OCI-LY7 (cell line): ENCODE measurements at regions of chr10 and their contacts with region 1.

Region 1: DNA sequence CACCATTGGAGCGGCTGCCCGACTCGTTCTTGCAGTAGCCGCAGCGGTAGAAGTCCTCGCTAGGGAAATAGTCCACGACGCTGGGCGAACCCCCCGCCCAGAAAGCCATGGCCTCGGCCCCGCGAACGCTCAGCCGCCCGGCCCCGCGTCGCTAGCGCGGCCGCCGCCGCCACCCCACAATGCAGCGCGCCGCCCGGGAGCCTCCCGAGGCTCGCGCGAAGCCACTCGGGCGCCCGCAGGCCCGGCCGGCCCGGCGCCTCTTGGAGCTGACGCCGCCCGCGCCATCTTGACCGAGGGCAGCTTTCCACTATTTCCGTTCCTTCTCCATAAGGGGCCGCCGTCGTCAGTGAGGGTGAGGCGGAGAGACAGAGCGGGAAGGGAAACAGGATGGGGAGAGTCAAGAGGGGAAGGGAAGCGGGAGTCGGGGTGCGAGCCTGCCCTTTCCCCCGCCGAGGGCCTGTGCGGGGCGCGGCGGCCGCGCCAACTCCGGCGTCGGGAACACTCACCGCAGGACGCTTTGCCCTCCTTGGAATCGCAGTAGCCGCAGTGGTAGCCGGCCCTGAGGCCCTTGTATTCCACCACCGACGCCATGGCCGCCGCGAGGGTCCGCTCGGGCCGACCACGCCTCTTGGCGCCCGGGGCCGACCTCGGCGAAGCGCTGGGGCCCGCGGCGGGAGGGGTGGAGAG is at the start of gene ATE1:
- DNase-seq: peak; percentile 90
- H3K4me3 ChIP-seq: peak within 1 kb of the TSS; percentile 96
- H3K27ac ChIP-seq: peak within 1 kb of the TSS; percentile 67
- H3K4me1 ChIP-seq: peaks cover 28% of the 10 kb centered on the region
- CTCF ChIP-seq: no peak
- total RNA-seq, gene ATE1: 14.8 and 17.8 TPM in 2 replicates

Region 2: DNA sequence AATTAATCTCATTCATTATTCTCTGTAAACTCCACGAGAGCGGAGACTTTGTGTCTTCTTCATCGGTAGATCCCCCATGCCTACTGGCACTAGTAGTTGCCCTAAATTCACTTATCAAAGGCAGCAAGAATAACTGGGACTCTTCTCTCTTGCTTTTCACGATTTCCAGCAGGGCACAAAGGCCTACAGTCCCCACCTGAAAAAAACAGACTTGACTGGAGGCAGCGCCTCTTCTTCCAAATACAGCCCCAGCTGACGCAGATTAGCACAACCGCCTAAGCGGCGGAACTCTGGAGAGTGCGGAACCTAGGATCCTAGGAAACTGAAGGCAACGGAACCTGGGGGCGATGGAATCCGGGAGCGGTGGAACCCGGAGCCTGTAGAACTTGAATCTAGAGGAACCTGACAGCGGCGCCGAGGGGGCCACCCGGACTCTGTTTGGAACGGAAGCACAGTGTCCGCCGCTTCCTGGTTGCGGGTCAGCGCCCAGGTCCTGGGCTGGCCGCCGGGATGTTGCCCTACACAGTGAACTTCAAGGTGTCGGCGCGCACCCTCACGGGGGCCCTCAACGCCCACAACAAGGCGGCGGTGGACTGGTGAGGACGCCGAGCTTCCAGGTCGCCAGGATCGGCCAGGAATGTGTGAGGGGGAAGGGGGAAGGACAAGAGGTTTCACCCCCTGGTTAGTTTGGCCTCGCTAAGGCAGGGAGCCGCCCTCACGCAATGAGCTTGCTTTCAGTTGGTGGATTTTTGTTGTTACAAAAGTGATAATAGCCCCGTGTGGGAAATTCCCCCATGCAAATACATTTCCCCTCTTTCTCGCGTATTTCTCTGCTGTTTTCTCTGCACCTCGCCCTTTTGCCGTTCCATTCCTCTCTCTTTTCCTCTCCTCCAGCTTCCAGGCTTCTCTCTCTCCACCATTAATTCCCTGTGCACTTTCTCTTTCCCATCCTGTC is 1076.8 kb before region 1 on chr10 and contains the start of gene WDR11:
- CTCF ChIA-PET with region 1: no interaction called
- POLR2A ChIA-PET with region 1: no interaction called
- intact Hi-C with region 1: loop called (anchors 10 kb)
- DNase-seq: peak; percentile 84
- H3K4me3 ChIP-seq: peak within 1 kb of the TSS; percentile 90
- H3K27ac ChIP-seq: peak within 1 kb of the TSS; percentile 62
- H3K4me1 ChIP-seq: peaks cover 19% of the 10 kb centered on the region
- CTCF ChIP-seq: no peak
- total RNA-seq, gene WDR11: 41.2 and 43.3 TPM in 2 replicates

Region 3: DNA sequence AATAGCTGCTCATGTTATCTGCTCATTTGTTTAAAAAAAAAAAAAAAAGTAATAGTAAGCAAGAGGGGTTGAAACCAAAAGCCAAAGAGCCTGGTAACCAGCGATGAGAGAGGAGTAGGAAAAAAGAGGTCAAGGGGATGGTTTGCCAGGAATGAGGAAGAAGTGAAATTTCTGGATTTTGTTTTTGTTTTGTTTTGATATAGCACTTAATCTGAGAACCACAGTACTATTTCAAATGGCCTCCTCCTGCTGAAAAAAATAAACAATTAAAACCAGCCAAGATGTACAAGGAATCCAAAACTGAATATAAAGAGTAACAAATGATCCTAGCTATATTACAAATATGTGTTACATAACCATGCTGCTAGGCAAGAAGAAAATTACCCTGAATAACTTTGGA is 542.8 kb before region 1 on chr10:
- CTCF ChIA-PET with region 1: no interaction called
- POLR2A ChIA-PET with region 1: no interaction called
- intact Hi-C with region 1: no loop called
- DNase-seq: no peak
- H3K4me3 ChIP-seq: no peak overlapping the region
- H3K27ac ChIP-seq: no peak overlapping the region
- H3K4me1 ChIP-seq: no peaks in the 10 kb centered on the region
- CTCF ChIP-seq: no peak

Region 4: GRCh38 chr10:121974535-121975294 is 46.7 kb after region 1 on chr10 and contains the start of gene NSMCE4A:
- CTCF ChIA-PET with region 1: no interaction called
- POLR2A ChIA-PET with region 1: interaction called, 3 read pairs
- intact Hi-C with region 1: loop called (anchors 1 kb)
- DNase-seq: peak; percentile 88
- H3K4me3 ChIP-seq: peak within 1 kb of the TSS; percentile 90
- H3K27ac ChIP-seq: peak within 1 kb of the TSS; percentile 83
- H3K4me1 ChIP-seq: peaks cover 8% of the 10 kb centered on the region
- CTCF ChIP-seq: peak; percentile 78; the same call in 1 of the 2 replicates
- total RNA-seq, gene NSMCE4A: 95.6 and 105 TPM in 2 replicates